Endothelial cell of umbilical vein (primary cell): ENCODE measurements at regions of chr15 and their contacts with region 1.

Region 1: GRCh38 chr15:34587717-34588674 is 4.5 kb upstream of the GOLGA8B start:
- DNase-seq: peak; percentile 74
- H3K4me3 ChIP-seq: peak overlapping the region in 1 of 3 experiments; percentile 58
- H3K27ac ChIP-seq: no peak overlapping the region
- H3K4me1 ChIP-seq: peaks cover 5% of the 10 kb centered on the region
- H3K27me3 ChIP-seq: no peaks in the 10 kb centered on the region
- CTCF ChIP-seq: peak; percentile 64 to 74
- POLR2A ChIP-seq: no peak

Region 2: DNA sequence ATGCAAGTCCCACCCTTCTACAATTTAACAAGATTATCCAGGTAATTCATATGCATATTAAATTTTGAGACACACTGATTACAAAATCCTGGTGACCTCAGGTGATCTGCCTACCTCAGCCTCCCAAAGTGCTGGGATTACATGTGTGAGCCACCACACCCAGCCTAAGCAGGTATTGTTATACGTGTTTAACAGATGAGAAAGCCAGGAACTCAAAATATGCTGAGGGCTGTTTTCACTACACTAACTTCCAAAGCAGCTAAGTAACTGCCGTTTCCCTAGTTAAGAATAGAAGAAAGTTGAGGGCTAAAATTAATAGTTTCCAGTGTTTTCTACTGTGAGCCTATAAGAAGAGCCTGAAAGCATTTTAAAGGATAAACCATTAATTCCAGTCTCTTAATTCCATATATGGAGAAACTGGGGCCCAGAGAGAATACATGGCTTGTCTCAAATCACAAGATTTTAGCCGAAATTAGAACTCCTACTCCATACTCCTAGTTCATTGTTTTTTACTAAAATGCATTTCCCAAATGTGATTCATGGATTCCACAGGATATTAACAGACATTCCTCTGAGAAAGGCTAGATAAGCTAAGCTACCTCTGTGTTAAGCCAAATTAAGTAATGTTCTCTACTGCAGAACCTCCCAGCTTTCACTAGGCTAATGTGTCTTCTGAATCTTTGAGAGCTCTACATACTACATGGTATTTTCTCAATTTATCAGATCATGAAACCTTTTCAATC is 532.0 kb before region 1 on chr15:
- CTCF ChIA-PET with region 1: interaction called, 12 read pairs
- POLR2A ChIA-PET with region 1: no interaction called
- dilution Hi-C with region 1: no loop called
- intact Hi-C with region 1: no loop called
- DNase-seq: peak; percentile 73
- H3K4me3 ChIP-seq: no peak overlapping the region
- H3K27ac ChIP-seq: peak overlapping the region; percentile 59
- H3K4me1 ChIP-seq: peaks cover 9% of the 10 kb centered on the region
- H3K27me3 ChIP-seq: peaks cover 0 to 1% of the 10 kb centered on the region in 2 experiments
- CTCF ChIP-seq: no peak
- POLR2A ChIP-seq: no peak

Region 3: DNA sequence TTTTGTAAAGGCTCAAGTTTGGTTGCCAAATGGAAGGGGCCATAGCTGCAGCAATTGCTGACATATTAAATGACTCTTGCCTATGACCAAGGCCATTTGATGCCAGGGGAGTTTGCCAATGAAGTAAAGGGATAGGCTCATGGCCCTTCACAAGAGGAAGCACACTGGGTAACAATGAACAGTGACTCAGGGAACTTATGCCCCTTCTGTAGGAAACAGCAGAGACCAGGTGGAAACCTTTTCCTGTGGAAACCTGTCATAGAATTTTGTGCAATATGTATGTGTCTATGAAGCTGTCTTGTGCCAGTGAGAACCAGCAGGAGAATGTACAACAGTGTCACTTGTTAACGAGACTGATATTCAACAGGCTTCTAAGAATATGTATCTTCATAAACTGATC is 523.6 kb before region 1 on chr15:
- CTCF ChIA-PET with region 1: interaction called, 12 read pairs
- POLR2A ChIA-PET with region 1: no interaction called
- dilution Hi-C with region 1: no loop called
- intact Hi-C with region 1: loop called (anchors 1 kb)
- DNase-seq: no peak
- H3K4me3 ChIP-seq: no peak overlapping the region
- H3K27ac ChIP-seq: no peak overlapping the region
- H3K4me1 ChIP-seq: no peaks in the 10 kb centered on the region
- H3K27me3 ChIP-seq: no peaks in the 10 kb centered on the region
- CTCF ChIP-seq: no peak
- POLR2A ChIP-seq: no peak

Region 4: DNA sequence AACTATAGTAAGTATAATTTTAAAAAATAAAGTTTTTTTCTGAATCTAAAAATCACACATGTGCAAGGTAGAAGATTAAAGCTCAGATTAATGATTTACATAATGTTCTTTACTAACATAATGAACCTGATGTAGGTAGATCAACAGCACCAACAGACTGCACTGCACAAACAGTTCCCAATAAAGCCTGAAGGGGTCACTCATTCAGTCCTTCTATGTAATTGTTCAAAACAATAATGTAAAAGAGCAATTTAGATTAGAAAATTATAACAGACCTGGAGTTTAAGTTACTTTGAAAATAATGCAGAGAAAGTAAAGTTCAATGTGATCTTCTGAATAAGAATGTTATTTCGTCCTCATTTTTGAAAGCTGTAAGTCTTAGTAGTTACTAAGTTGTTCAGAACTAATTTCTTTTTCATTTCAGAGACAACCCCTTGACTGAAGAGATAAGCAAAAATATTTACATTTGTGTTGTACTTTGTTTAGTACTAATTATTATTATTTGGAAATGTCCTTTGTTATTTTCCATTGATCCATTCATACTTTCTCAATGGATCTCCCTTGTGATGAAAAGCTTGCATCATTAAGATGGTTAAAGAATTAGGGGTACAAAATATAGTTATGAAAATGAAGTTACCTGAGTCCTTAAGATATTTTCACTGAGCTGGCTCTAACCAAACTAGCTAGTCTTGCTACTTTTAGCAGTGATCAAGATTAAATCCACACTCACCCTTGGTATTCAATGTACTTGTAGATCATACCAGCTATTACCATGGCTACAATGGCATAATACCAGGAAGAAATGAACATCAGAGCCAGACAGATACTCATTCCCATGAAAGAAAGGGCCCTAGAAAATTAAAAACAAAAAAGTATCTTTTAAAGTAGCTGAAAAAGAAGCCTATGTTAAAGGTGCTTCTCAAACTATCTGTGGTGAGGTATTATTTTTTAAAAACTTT is 346.3 kb before region 1 on chr15:
- CTCF ChIA-PET with region 1: interaction called, 6 read pairs
- POLR2A ChIA-PET with region 1: no interaction called
- dilution Hi-C with region 1: no loop called
- intact Hi-C with region 1: loop called (anchors 1 kb)
- DNase-seq: peak; percentile 67
- H3K4me3 ChIP-seq: no peak overlapping the region
- H3K27ac ChIP-seq: no peak overlapping the region
- H3K4me1 ChIP-seq: peaks cover 21% of the 10 kb centered on the region
- H3K27me3 ChIP-seq: no peaks in the 10 kb centered on the region
- CTCF ChIP-seq: peak; percentile 47 to 51
- POLR2A ChIP-seq: no peak

Region 5: GRCh38 chr15:34514251-34514670 is 73.7 kb before region 1 on chr15:
- CTCF ChIA-PET with region 1: interaction called, 14 read pairs
- POLR2A ChIA-PET with region 1: no interaction called
- dilution Hi-C with region 1: no loop called
- intact Hi-C with region 1: loop called (anchors 2 kb)
- DNase-seq: peak; percentile 24
- H3K4me3 ChIP-seq: peak overlapping the region; percentile 44 to 68 (median 63)
- H3K27ac ChIP-seq: no peak overlapping the region
- H3K4me1 ChIP-seq: peaks cover 9% of the 10 kb centered on the region
- H3K27me3 ChIP-seq: peaks cover 21 to 41% of the 10 kb centered on the region in 2 experiments
- CTCF ChIP-seq: no peak
- POLR2A ChIP-seq: no peak

Region 6: GRCh38 chr15:34993877-34994276 is 405.9 kb after region 1 on chr15:
- CTCF ChIA-PET with region 1: no interaction called
- POLR2A ChIA-PET with region 1: no interaction called
- dilution Hi-C with region 1: no loop called
- intact Hi-C with region 1: no loop called
- DNase-seq: no peak
- H3K4me3 ChIP-seq: no peak overlapping the region
- H3K27ac ChIP-seq: no peak overlapping the region
- H3K4me1 ChIP-seq: peaks cover 3% of the 10 kb centered on the region
- H3K27me3 ChIP-seq: peaks cover 0 to 4% of the 10 kb centered on the region in 2 experiments
- CTCF ChIP-seq: no peak
- POLR2A ChIP-seq: no peak